Ascending aorta (tissue), 2 donors: ENCODE measurements at regions of chr10 and their contacts with region 1.

Region 1: DNA sequence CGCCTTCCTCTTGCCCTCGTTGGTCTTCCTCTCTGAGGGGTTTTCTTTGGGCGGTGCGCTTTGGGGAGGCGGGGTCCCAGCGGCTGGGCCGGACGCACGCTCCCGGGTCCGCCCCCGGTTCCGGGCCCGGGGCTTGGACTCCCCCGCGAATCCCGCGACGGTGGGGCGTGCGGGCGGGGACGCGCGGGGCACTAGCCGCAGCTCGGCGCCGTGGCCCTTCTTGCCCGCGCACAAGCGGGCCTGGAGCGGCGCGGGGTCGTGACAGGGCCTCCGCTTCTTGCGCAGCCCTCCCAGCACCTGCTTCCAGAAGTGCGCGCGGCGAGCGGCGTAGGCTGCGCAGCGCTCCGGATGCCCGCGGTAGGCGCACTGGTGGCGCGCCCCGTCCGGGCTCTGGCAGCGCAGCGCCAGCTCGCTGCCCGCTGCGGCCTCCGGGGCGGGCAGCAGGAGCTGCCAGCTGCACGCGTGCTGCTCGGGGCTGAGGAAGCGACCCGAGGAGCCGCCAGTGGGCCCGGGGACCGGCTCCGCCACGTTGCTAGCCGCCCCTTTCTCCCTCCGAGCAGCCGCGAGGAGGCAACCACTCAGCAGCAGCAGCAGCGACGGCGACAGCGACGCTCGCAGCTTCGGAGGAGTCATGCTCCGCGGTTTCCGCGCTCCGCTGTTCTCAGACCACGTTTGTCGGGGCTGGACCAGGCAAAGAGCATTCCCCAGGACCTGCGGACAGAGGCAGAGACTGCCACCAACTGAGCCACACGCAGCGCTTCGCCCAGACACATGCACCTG is 759 bp downstream of the FGFBP3 start:
- DNase-seq: peak in 1 of 2 donors; percentile 86
- H3K4me3 ChIP-seq: peak overlapping the region; percentile 88 to 91
- H3K27ac ChIP-seq: peak overlapping the region; percentile 77 to 85
- H3K4me1 ChIP-seq: peaks cover 0 to 6% of the 10 kb centered on the region in 2 donors
- H3K27me3 ChIP-seq: no peaks in the 10 kb centered on the region
- CTCF ChIP-seq: peak in 2 of 3 experiments; percentile 38 to 49

Region 2: GRCh38 chr10:91298224-91298871 is 610.2 kb before region 1 on chr10:
- intact Hi-C with region 1: loop called (anchors 5 kb)
- DNase-seq: peak in 1 of 2 donors; percentile 82
- H3K4me3 ChIP-seq: peak overlapping the region; percentile 62 to 68
- H3K27ac ChIP-seq: no peak overlapping the region
- H3K4me1 ChIP-seq: peaks cover 5 to 11% of the 10 kb centered on the region in 2 donors
- H3K27me3 ChIP-seq: no peaks in the 10 kb centered on the region
- CTCF ChIP-seq: peak; percentile 93 to 97 (median 95)

Region 3: GRCh38 chr10:91389636-91390512 is 518.7 kb before region 1 on chr10:
- intact Hi-C with region 1: loop called (anchors 5 kb)
- DNase-seq: no peak
- H3K4me3 ChIP-seq: peak overlapping the region in 1 of 2 donors; percentile 54
- H3K27ac ChIP-seq: no peak overlapping the region
- H3K4me1 ChIP-seq: no peaks in the 10 kb centered on the region
- H3K27me3 ChIP-seq: no peaks in the 10 kb centered on the region
- CTCF ChIP-seq: peak in 2 of 3 experiments; percentile 65 to 67

Region 4: DNA sequence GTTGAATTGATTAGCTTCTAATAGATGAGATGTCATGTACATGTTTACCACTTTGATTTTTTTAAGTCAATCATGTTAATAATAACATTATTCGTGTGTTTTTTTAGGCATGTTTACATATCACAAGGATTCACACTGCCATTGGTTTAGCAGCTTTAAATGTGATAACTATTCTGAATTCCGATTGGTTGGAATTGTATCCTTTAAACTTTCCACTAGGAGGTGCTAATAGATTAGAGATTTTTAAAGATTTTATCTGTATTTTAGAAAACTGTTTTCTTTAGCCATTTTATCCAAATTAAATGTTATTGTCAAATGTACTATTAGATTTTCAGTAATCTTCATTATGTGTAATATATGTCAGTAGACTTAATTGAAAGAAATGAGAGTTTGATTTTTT is 415.2 kb before region 1 on chr10:
- intact Hi-C with region 1: loop called (anchors 5 kb)
- DNase-seq: no peak
- H3K4me3 ChIP-seq: no peak overlapping the region
- H3K27ac ChIP-seq: no peak overlapping the region
- H3K4me1 ChIP-seq: no peaks in the 10 kb centered on the region
- H3K27me3 ChIP-seq: no peaks in the 10 kb centered on the region
- CTCF ChIP-seq: peak; percentile 42 to 62 (median 55)

Region 5: GRCh38 chr10:91758303-91759146 is 150.0 kb before region 1 on chr10:
- intact Hi-C with region 1: loop called (anchors 2 kb)
- DNase-seq: no peak
- H3K4me3 ChIP-seq: no peak overlapping the region
- H3K27ac ChIP-seq: no peak overlapping the region
- H3K4me1 ChIP-seq: no peaks in the 10 kb centered on the region
- H3K27me3 ChIP-seq: no peaks in the 10 kb centered on the region
- CTCF ChIP-seq: peak in 2 of 3 experiments; percentile 35 to 60

Region 6: GRCh38 chr10:91856637-91857036 is 51.9 kb before region 1 on chr10:
- intact Hi-C with region 1: loop called (anchors 5 kb)
- DNase-seq: no peak
- H3K4me3 ChIP-seq: no peak overlapping the region
- H3K27ac ChIP-seq: no peak overlapping the region
- H3K4me1 ChIP-seq: no peaks in the 10 kb centered on the region
- H3K27me3 ChIP-seq: no peaks in the 10 kb centered on the region
- CTCF ChIP-seq: peak in 1 of 3 experiments; percentile 41

Region 7: DNA sequence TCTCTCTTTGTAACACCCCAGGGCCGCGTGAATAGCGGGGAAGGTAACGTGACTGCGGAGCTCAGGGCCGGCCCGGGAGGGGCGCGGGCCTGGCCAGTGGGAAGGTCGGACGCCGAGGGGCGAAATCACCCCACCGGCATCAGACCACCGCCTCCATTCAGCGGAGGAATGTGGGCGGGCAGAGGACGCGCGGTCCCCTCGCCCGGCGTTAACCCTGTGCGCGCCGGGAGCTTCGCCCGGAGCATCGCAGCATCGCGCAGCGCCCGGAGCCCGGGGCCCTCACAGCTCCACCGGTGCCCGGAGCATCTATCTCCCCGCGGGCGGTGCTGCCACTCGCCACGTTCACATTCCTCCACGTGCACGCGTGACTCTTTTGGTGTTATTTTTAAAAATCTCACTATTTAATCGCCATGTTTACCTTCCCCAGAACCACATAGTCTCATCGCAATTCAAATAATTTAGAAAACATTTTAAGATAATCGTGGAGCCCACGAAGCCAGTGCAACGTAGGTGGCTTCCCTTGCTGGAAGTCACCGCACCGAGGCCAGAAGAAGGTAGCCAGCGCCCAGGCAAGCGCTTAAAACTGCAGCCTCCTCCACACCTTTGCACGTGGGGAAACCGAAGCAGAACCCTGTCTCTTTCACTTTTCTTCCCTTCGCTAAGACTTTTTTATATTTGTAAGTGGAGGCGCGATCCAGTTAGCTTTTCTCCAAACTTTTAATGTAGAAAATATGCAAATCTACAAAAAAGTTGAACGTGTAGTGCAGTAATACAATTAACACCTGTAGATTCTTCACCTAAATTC is 21.1 kb before region 1 on chr10:
- intact Hi-C with region 1: loop called (anchors 2 kb)
- DNase-seq: peak in 1 of 2 donors; percentile 73
- H3K4me3 ChIP-seq: peak overlapping the region; percentile 66 to 78
- H3K27ac ChIP-seq: peak overlapping the region; percentile 28 to 76
- H3K4me1 ChIP-seq: peaks cover 3 to 20% of the 10 kb centered on the region in 2 donors
- H3K27me3 ChIP-seq: no peaks in the 10 kb centered on the region
- CTCF ChIP-seq: no peak